Activated CD4-positive, alpha-beta T cell treated with anti-CD3 and anti-CD28 coated beads for 36 hours (primary cell): ENCODE measurements at regions of chr17 and their contacts with region 1.

Region 1: DNA sequence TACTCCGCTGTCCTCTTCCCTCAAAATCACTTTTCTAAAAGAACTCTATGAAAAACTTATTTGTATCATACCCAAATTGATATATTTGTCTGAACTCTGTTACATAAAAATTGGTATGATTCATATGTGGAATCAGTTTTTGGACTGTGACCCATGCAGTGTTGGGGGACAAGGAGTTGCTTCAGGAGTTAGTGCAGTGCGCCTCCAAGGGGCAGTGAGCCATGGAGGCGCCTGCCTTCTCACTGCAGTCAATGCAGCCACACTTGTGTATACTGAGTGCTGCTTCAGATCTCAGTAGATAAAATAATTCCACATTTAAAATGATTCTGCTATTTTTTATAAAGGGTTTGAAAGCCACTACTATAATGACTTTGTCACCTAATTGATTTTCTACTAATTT is 32.5 kb downstream of the DGKE start:
- DNase-seq: no peak
- ATAC-seq: no peak
- H3K4me3 Mint-ChIP-seq: no peak overlapping the region
- H3K27ac Mint-ChIP-seq: no peak overlapping the region
- H3K4me1 Mint-ChIP-seq: peaks cover 16% of the 10 kb centered on the region
- H3K27me3 Mint-ChIP-seq: no peaks in the 10 kb centered on the region

Region 2: DNA sequence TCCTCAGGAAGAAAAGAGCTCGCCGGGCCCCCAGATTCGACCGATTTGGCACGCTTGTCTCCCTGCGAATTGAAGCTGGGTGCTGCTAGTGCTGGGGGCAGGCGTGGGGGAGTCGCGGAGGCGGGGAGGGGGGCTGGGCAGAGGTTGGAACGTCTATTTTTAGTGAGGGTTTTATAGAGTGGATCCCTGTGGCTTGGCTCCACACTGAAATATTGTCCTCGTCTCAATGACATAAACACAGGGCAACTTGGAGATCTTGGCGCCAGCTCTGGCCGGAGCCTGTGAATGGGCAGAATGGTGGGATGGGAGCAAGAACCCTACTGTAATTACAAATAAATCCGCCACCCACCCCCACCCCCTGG is 288.7 kb before region 1 on chr17:
- CTCF ChIA-PET with region 1: no interaction called
- POLR2A ChIA-PET with region 1: no interaction called
- intact Hi-C with region 1: no loop called
- DNase-seq: no peak
- ATAC-seq: no peak
- H3K4me3 Mint-ChIP-seq: no peak overlapping the region
- H3K27ac Mint-ChIP-seq: no peak overlapping the region
- H3K4me1 Mint-ChIP-seq: no peaks in the 10 kb centered on the region
- H3K27me3 Mint-ChIP-seq: peaks cover 10% of the 10 kb centered on the region

Region 3: GRCh38 chr17:56819431-56820145 is 46.9 kb before region 1 on chr17:
- CTCF ChIA-PET with region 1: interaction called, 17 read pairs
- POLR2A ChIA-PET with region 1: no interaction called
- intact Hi-C with region 1: no loop called
- DNase-seq: peak; percentile 84
- ATAC-seq: peak; percentile 83
- H3K4me3 Mint-ChIP-seq: no peak overlapping the region
- H3K27ac Mint-ChIP-seq: peak overlapping the region; percentile 7
- H3K4me1 Mint-ChIP-seq: peaks cover 22% of the 10 kb centered on the region
- H3K27me3 Mint-ChIP-seq: no peaks in the 10 kb centered on the region

Region 4: GRCh38 chr17:56918916-56919639 is 52.6 kb after region 1 on chr17:
- CTCF ChIA-PET with region 1: interaction called, 3 read pairs
- POLR2A ChIA-PET with region 1: interaction called, 5 read pairs
- intact Hi-C with region 1: loop called in 1 of 2 experiments (anchors 1 kb)
- DNase-seq: no peak
- ATAC-seq: no peak
- H3K4me3 Mint-ChIP-seq: no peak overlapping the region
- H3K27ac Mint-ChIP-seq: peak overlapping the region; percentile 53
- H3K4me1 Mint-ChIP-seq: peaks cover 47% of the 10 kb centered on the region
- H3K27me3 Mint-ChIP-seq: no peaks in the 10 kb centered on the region